ENCODE measurements at regions of chr11 and their contacts with region 1.

Region 1: DNA sequence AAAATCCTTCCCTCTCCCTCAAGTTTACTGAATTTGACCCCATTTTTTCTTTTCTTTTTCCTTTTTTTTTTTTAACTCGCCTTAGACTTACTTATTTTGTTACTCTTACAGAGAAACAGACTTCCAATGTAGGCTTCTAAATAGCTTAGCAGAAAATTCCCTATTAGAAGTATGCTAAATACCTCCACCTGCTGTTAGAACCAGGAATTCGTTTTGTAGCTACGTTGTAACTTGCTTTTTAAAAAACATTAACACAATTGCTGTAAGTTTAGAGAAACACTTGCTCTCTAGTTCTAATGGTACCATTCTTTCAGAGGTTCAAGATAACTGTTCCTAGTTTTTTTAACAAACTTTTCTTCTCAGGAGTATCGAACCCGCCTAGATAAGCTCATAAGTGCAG is 324.2 kb downstream of the DCDC1 start:
- DNase-seq: no peak
- ATAC-seq: no peak
- H3K4me3 ChIP-seq: no peak overlapping the region
- H3K27ac ChIP-seq: no peak overlapping the region
- H3K4me1 ChIP-seq: no peaks in the 10 kb centered on the region
- H3K27me3 ChIP-seq: no peaks in the 10 kb centered on the region
- CTCF ChIP-seq: no peak; the same call in 1 of the 2 replicates

Region 2: GRCh38 chr11:31022080-31022479 is 23.3 kb before region 1 on chr11:
- CTCF ChIA-PET with region 1: no interaction called
- POLR2A ChIA-PET with region 1: no interaction called
- in situ Hi-C with region 1: no loop called
- intact Hi-C with region 1: no loop called
- DNase-seq: no peak
- ATAC-seq: no peak
- H3K4me3 ChIP-seq: no peak overlapping the region
- H3K27ac ChIP-seq: no peak overlapping the region
- H3K4me1 ChIP-seq: no peaks in the 10 kb centered on the region
- H3K27me3 ChIP-seq: no peaks in the 10 kb centered on the region
- CTCF ChIP-seq: no peak

Region 3: GRCh38 chr11:31089117-31089516 is 43.8 kb after region 1 on chr11:
- CTCF ChIA-PET with region 1: interaction called, 10 read pairs
- POLR2A ChIA-PET with region 1: no interaction called
- in situ Hi-C with region 1: no loop called
- intact Hi-C with region 1: no loop called
- DNase-seq: no peak
- ATAC-seq: no peak
- H3K4me3 ChIP-seq: no peak overlapping the region
- H3K27ac ChIP-seq: no peak overlapping the region
- H3K4me1 ChIP-seq: no peaks in the 10 kb centered on the region
- H3K27me3 ChIP-seq: no peaks in the 10 kb centered on the region
- CTCF ChIP-seq: no peak

Region 4: DNA sequence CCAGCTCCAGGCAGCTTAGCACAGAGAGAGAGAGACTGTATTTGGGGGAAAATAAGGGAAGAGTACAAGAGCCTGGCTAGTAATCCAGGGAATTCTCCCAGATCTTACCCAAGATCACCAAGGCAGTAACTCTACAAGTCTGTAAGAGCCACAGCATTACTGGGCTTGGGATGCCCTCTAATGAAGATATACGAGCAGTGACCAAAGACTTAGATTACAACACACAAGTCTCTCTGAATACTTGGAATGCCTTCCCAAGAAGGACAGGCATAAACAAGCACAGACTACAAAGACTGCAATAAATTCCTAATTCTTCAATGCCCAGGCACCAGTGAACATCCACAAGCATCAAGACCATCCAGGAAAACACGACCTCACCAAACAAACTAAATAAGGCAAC is 342.0 kb after region 1 on chr11:
- CTCF ChIA-PET with region 1: no interaction called
- POLR2A ChIA-PET with region 1: no interaction called
- in situ Hi-C with region 1: no loop called
- intact Hi-C with region 1: no loop called
- DNase-seq: no peak
- ATAC-seq: no peak
- H3K4me3 ChIP-seq: no peak overlapping the region
- H3K27ac ChIP-seq: no peak overlapping the region
- H3K4me1 ChIP-seq: no peaks in the 10 kb centered on the region
- H3K27me3 ChIP-seq: no peaks in the 10 kb centered on the region
- CTCF ChIP-seq: no peak